Caco-2 (cell line): ENCODE measurements at regions of chr17 and their contacts with region 1.

Region 1: DNA sequence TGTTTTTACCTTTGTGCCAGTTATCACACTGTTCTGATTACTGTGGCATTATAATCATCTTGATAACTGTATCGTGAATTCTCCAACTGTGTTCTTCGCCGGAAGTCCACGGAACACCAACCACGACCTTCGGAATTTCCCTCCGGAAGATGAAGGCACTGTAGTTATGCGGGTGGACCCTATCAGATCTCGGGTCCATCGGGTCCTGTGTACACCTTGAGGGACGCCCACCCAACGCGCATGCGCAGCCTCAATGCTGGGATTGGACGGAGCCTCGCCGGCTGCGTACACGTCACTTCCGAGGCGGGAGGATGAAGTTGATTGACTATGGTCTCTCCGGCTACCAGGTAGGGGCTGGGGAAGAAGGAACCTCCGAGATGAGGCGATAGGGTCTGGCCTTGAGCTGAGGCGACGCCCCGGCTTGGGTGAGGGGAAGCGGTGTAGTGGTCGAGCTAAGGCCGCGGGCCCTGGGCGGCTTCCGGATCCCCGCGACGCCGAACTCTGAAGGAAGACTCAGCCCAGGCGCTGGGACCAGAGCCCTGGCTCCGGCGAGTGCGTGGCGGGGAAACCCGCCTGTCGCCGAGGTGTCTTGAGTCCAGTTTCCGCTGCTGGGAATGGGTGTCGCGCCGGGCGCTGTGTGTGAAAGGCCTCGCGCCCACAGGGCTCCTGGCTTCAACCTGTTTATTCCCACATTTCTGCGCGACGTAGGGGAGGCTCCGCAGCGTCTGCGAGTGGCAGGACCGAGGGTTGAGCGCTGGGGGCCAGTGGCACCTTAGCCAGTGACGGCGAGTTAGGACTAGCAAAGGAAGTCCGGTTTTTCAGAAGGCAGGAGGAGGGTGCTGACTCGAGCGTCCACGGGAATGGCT is at the start of gene DHRS7B:
- DNase-seq: peak; percentile 98 to 99
- H3K4me3 ChIP-seq: peak within 1 kb of the TSS; percentile 82
- H3K4me3 Mint-ChIP-seq: peak within 1 kb of the TSS; percentile 83
- H3K27ac Mint-ChIP-seq: peak within 1 kb of the TSS; percentile 84
- H3K4me1 ChIP-seq: no peaks in the 10 kb centered on the region
- H3K4me1 Mint-ChIP-seq: peaks cover 18% of the 10 kb centered on the region
- H3K27me3 ChIP-seq: no peaks in the 10 kb centered on the region
- H3K27me3 Mint-ChIP-seq: no peaks in the 10 kb centered on the region
- CTCF ChIP-seq: no peak
- total RNA-seq, gene DHRS7B: 22.8 and 30.0 TPM in 2 replicates

Region 2: GRCh38 chr17:21043286-21044232 is 83.3 kb before region 1 on chr17:
- CTCF ChIA-PET with region 1: interaction called, 3 read pairs
- POLR2A ChIA-PET with region 1: interaction called, 3 read pairs
- intact Hi-C with region 1: loop called (anchors 1 kb)
- DNase-seq: peak; percentile 99
- H3K4me3 ChIP-seq: peak overlapping the region; percentile 87
- H3K4me3 Mint-ChIP-seq: peak overlapping the region; percentile 80
- H3K27ac Mint-ChIP-seq: peak overlapping the region; percentile 71
- H3K4me1 ChIP-seq: no peaks in the 10 kb centered on the region
- H3K4me1 Mint-ChIP-seq: peaks cover 9% of the 10 kb centered on the region
- H3K27me3 ChIP-seq: no peaks in the 10 kb centered on the region
- H3K27me3 Mint-ChIP-seq: no peaks in the 10 kb centered on the region
- CTCF ChIP-seq: peak; percentile 86 to 89

Region 3: DNA sequence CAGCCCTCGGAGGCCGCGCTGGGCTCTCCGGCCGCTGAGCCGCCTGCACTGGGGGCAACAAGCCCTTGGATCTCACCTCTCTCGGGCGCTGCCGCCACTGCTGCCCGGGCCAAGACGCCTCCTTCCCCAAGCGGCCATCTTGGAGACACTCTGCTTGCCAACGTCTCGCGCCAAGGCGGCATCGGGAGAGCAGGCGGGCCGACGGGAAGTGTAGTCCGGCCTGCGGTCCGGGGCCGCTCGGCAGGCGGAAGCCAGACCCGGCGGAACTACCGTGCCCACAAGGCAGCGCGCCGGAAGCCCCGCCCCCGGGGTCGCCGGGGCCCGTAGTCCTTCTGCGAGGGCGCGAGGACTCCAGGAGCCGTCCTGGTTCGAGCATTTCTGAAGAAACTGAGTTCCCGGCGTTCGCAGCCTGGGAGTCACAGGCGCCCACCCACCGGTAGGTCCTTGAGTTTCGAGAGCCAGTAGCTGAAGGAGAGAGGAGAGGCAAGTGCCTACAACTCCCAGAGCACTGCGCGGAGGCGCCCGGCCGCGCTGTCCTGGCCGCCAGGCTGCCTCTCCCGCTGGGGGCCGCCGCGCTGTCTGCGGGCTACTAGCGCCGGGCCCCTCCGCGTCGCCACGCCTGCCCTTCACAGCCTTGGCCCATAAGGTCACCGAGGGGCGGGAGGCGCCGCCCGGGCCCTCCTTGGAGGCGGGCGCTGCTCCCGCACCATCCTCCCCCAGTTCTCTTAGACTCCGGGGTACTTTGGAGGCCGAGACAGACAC is 87.3 kb after region 1 on chr17 and contains the start of gene TMEM11:
- CTCF ChIA-PET with region 1: interaction called, 3 read pairs
- POLR2A ChIA-PET with region 1: no interaction called
- intact Hi-C with region 1: loop called (anchors 1 kb)
- DNase-seq: peak; percentile 96 to 98
- H3K4me3 ChIP-seq: peak within 1 kb of the TSS; percentile 89
- H3K4me3 Mint-ChIP-seq: peak within 1 kb of the TSS; percentile 96
- H3K27ac Mint-ChIP-seq: peak within 1 kb of the TSS; percentile 98
- H3K4me1 ChIP-seq: peaks cover 21% of the 10 kb centered on the region; the same call in 1 of the 2 replicates
- H3K4me1 Mint-ChIP-seq: peaks cover 29% of the 10 kb centered on the region
- H3K27me3 ChIP-seq: no peaks in the 10 kb centered on the region
- H3K27me3 Mint-ChIP-seq: no peaks in the 10 kb centered on the region
- CTCF ChIP-seq: peak in 1 of 2 experiments; percentile 1
- total RNA-seq, gene TMEM11: 39.1 and 40.7 TPM in 2 replicates

Region 4: DNA sequence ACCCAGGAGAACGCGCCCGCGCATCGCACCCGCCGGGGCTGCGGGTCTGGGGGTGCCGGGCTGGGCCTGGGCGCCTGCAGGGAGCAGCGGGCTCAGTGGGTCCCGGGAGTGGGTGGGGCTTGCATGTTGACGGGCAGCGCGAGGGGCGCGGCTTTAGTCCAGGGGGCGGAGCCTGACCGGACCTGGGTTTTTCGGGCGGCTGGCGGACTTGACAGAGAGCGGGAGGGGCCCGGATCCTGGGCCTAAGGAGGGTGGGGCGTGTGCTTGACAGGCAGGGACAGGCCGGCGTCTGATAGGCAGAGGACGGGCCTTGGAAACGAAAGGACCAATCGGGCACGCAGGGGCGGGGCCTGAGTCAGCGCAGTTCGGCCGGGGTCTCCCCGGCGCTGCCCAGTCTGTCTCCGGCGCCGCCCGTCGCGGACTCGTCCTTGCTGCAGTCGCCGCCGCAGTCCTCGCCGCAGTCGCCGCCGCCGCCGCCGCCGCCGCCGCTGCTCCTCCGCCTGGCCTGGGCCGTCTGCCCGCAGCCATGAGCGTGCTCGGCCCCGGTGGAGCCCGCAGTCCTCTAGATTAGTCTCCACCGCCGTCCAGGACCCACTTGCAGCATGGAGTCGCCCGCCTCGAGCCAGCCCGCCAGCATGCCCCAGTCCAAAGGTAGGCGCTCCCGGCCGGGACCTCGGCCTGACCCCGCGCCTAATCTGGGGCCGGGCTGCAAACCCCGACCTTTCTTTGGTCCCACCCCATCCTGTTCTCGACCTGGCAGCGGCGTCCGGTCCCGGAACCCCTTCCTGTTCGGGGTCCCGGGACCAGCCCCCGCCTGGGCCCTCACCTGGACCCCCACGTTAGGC is 157.7 kb after region 1 on chr17 and contains the start of gene MAP2K3:
- CTCF ChIA-PET with region 1: no interaction called
- POLR2A ChIA-PET with region 1: no interaction called
- intact Hi-C with region 1: loop called (anchors 2 kb)
- DNase-seq: peak; percentile 99 to 100
- H3K4me3 ChIP-seq: peak within 1 kb of the TSS; percentile 83
- H3K4me3 Mint-ChIP-seq: peak within 1 kb of the TSS; percentile 89
- H3K27ac Mint-ChIP-seq: peak within 1 kb of the TSS; percentile 70
- H3K4me1 ChIP-seq: peaks cover 22% of the 10 kb centered on the region
- H3K4me1 Mint-ChIP-seq: peaks cover 24% of the 10 kb centered on the region
- H3K27me3 ChIP-seq: no peaks in the 10 kb centered on the region; the same call in 1 of the 2 replicates
- H3K27me3 Mint-ChIP-seq: no peaks in the 10 kb centered on the region
- CTCF ChIP-seq: no peak
- total RNA-seq, gene MAP2K3: 49.5 and 50.9 TPM in 2 replicates